ENCODE measurements at regions of chr1 and their contacts with region 1.

Region 1: GRCh38 chr1:205477759-205478247 is 22.0 kb upstream of the BLACAT1 start:
- DNase-seq: no peak
- H3K4me3 ChIP-seq: no peak overlapping the region
- H3K4me3 Mint-ChIP-seq: no peak overlapping the region
- H3K27ac ChIP-seq: no peak overlapping the region
- H3K27ac Mint-ChIP-seq: peak overlapping the region in 1 of 7 donors; percentile 45
- H3K4me1 ChIP-seq: peaks cover 29% of the 10 kb centered on the region
- H3K4me1 Mint-ChIP-seq: peaks cover 19 to 40% (median 27%) of the 10 kb centered on the region in 4 donors
- H3K27me3 ChIP-seq: no peaks in the 10 kb centered on the region
- H3K27me3 Mint-ChIP-seq: peaks cover 15 to 19% of the 10 kb centered on the region in 2 donors

Region 2: DNA sequence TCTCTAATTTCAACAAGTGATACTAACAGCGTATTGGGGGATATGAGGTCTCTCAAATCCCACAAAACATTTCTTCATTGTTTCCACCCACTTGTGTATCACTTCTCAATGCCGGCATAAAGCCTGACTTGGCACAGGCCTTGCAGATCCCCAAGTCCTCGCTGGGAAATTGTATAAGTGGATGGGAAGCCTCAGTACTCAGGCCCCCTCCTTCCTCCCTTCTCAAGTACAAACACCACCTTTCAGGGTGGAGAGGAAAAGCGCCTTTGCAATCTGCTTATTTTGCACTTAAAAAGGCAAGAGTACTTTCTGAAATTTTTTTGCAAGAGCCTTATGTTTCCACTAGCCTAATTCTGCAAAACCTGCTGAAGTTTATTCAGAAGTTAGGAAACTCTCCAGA is 95.2 kb before region 1 on chr1:
- CTCF ChIA-PET with region 1: no interaction called
- POLR2A ChIA-PET with region 1: no interaction called
- intact Hi-C with region 1: no loop called
- DNase-seq: no peak
- H3K4me3 ChIP-seq: no peak overlapping the region
- H3K4me3 Mint-ChIP-seq: no peak overlapping the region
- H3K27ac ChIP-seq: no peak overlapping the region
- H3K27ac Mint-ChIP-seq: no peak overlapping the region
- H3K4me1 ChIP-seq: no peaks in the 10 kb centered on the region
- H3K4me1 Mint-ChIP-seq: peaks cover 0 to under 1% (median 0%) of the 10 kb centered on the region in 4 donors
- H3K27me3 ChIP-seq: no peaks in the 10 kb centered on the region
- H3K27me3 Mint-ChIP-seq: peaks cover 2 to 8% of the 10 kb centered on the region in 2 donors

Region 3: GRCh38 chr1:205440476-205441317 is 37.1 kb before region 1 on chr1:
- CTCF ChIA-PET with region 1: interaction called, 7 read pairs
- POLR2A ChIA-PET with region 1: interaction called, 11 read pairs
- intact Hi-C with region 1: loop called (anchors 5 kb)
- DNase-seq: peak; percentile 49 to 81 (median 60)
- H3K4me3 ChIP-seq: peak overlapping the region; percentile 20 to 64
- H3K4me3 Mint-ChIP-seq: peak overlapping the region; percentile 76 to 93 (median 88)
- H3K27ac ChIP-seq: peak overlapping the region; percentile 65
- H3K27ac Mint-ChIP-seq: peak overlapping the region; percentile 78 to 94 (median 91)
- H3K4me1 ChIP-seq: peaks cover 28% of the 10 kb centered on the region
- H3K4me1 Mint-ChIP-seq: peaks cover 23 to 34% (median 26%) of the 10 kb centered on the region in 4 donors
- H3K27me3 ChIP-seq: no peaks in the 10 kb centered on the region
- H3K27me3 Mint-ChIP-seq: peaks cover 0 to 4% of the 10 kb centered on the region in 2 donors